HepG2 (cell line): ENCODE measurements at regions of chr11 and their contacts with region 1.

Region 1: GRCh38 chr11:26276798-26277424 is 55.0 kb upstream of the ANO3 start:
- DNase-seq: peak; percentile 38
- ATAC-seq: peak; percentile 76
- H3K4me3 ChIP-seq: no peak overlapping the region
- H3K27ac ChIP-seq: no peak overlapping the region
- H3K4me1 ChIP-seq: no peaks in the 10 kb centered on the region
- H3K27me3 ChIP-seq: no peaks in the 10 kb centered on the region
- CTCF ChIP-seq: peak; percentile 84
- EP300 ChIP-seq: no peak
- POLR2A ChIP-seq: no peak
- RAD21 ChIP-seq: peak; percentile 58

Region 2: DNA sequence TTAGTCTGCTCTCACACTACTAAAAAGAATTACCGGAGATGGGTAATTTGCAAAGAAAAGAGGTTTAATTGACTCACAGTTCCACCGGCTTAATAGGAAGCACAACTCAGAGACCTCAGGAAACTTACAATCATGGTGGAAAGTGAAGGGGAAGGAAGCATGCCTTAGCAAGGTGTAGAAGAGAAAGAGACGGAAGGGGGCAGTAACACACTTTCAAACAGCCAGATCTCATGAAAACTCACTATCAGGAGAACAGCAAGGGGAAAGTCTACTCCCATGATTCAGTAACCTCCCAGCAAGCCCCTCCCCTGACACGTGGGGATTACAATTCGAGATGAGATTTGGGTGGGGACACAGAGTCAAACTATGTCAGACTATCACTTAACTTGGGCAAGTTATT is 181.6 kb before region 1 on chr11:
- CTCF ChIA-PET with region 1: no interaction called
- POLR2A ChIA-PET with region 1: no interaction called
- in situ Hi-C with region 1: no loop called
- intact Hi-C with region 1: loop called (anchors 1 kb)
- DNase-seq: peak; percentile 2
- ATAC-seq: peak; percentile 67; the same call in 2 of the 3 replicates
- H3K4me3 ChIP-seq: no peak overlapping the region
- H3K27ac ChIP-seq: no peak overlapping the region
- H3K4me1 ChIP-seq: no peaks in the 10 kb centered on the region
- H3K27me3 ChIP-seq: no peaks in the 10 kb centered on the region
- CTCF ChIP-seq: peak; percentile 18; the same call in 1 of the 2 replicates
- EP300 ChIP-seq: no peak
- POLR2A ChIP-seq: no peak
- RAD21 ChIP-seq: no peak

Region 3: GRCh38 chr11:26412955-26413354 is 136.0 kb after region 1 on chr11:
- CTCF ChIA-PET with region 1: no interaction called
- POLR2A ChIA-PET with region 1: no interaction called
- in situ Hi-C with region 1: no loop called
- intact Hi-C with region 1: no loop called
- DNase-seq: no peak
- ATAC-seq: no peak
- H3K4me3 ChIP-seq: no peak overlapping the region
- H3K27ac ChIP-seq: no peak overlapping the region
- H3K4me1 ChIP-seq: no peaks in the 10 kb centered on the region
- H3K27me3 ChIP-seq: no peaks in the 10 kb centered on the region
- CTCF ChIP-seq: no peak
- EP300 ChIP-seq: no peak
- POLR2A ChIP-seq: no peak
- RAD21 ChIP-seq: no peak